Calu3 (cell line): ENCODE measurements at regions of chr12 and their contacts with region 1.

Region 1: GRCh38 chr12:57452937-57453509 is 2.1 kb upstream of the INHBE start:
- DNase-seq: peak; percentile 90
- H3K4me3 Mint-ChIP-seq: no peak overlapping the region
- H3K27ac Mint-ChIP-seq: no peak overlapping the region
- H3K4me1 Mint-ChIP-seq: peaks cover 29% of the 10 kb centered on the region
- H3K27me3 Mint-ChIP-seq: peaks cover 27% of the 10 kb centered on the region
- CTCF ChIP-seq: peak; percentile 68

Region 2: GRCh38 chr12:57263096-57263495 is 189.9 kb before region 1 on chr12:
- CTCF ChIA-PET with region 1: interaction called, 8 read pairs
- intact Hi-C with region 1: loop called (anchors 1 kb)
- DNase-seq: no peak
- H3K4me3 Mint-ChIP-seq: no peak overlapping the region
- H3K27ac Mint-ChIP-seq: no peak overlapping the region
- H3K4me1 Mint-ChIP-seq: no peaks in the 10 kb centered on the region
- H3K27me3 Mint-ChIP-seq: no peaks in the 10 kb centered on the region
- CTCF ChIP-seq: no peak

Region 3: GRCh38 chr12:57309420-57309819 is 143.6 kb before region 1 on chr12:
- CTCF ChIA-PET with region 1: interaction called, 63 read pairs
- intact Hi-C with region 1: loop called (anchors 1 kb)
- DNase-seq: no peak
- H3K4me3 Mint-ChIP-seq: no peak overlapping the region
- H3K27ac Mint-ChIP-seq: no peak overlapping the region
- H3K4me1 Mint-ChIP-seq: no peaks in the 10 kb centered on the region
- H3K27me3 Mint-ChIP-seq: no peaks in the 10 kb centered on the region
- CTCF ChIP-seq: no peak